ENCODE measurements at regions of chr2 and their contacts with region 1.

Region 1: GRCh38 chr2:64727013-64727767 is 73.5 kb upstream of the SERTAD2 start:
- DNase-seq: no peak
- H3K4me3 ChIP-seq: no peak overlapping the region
- H3K27ac ChIP-seq: peak overlapping the region; percentile 54 to 68 (median 62)
- H3K4me1 ChIP-seq: peaks cover 14 to 49% (median 24%) of the 10 kb centered on the region in 4 donors
- H3K27me3 ChIP-seq: no peaks in the 10 kb centered on the region
- CTCF ChIP-seq: no peak
- EP300 ChIP-seq: no peak
- POLR2A ChIP-seq: no peak

Region 2: DNA sequence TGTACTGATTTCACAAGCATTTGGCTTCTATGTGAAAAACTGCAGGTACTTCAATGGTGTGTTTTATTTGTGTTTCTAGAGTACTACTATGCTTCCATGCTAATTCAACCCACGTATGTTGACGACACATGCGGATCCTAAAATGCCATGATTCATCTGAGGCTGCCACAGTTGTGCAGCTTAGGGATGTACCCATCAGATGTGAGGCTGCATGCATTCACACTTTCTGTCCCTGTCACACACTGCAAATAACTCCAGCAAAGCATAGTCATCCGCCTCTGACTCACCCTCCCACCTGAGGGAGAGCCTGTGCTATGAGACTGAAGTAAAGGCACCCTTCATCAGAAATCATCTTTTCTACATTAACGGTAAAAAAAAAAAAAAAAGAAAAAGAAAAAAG is 51.3 kb before region 1 on chr2:
- in situ Hi-C with region 1: no loop called
- intact Hi-C with region 1: loop called (anchors 10 kb)
- DNase-seq: no peak
- H3K4me3 ChIP-seq: no peak overlapping the region
- H3K27ac ChIP-seq: no peak overlapping the region
- H3K4me1 ChIP-seq: peaks cover 0 to 22% (median 0%) of the 10 kb centered on the region in 4 donors
- H3K27me3 ChIP-seq: no peaks in the 10 kb centered on the region
- CTCF ChIP-seq: no peak
- EP300 ChIP-seq: no peak
- POLR2A ChIP-seq: no peak